Naive thymus-derived CD8-positive, alpha-beta T cell (primary cell): ENCODE measurements at regions of chr4 and their contacts with region 1.

Region 1: GRCh38 chr4:83034630-83035494 is at the start of gene COPS4:
- DNase-seq: peak; percentile 83 to 98 (median 95)
- ATAC-seq: peak; percentile 94 to 96
- H3K4me3 Mint-ChIP-seq: peak within 1 kb of the TSS; percentile 91 to 100 (median 100)
- H3K27ac Mint-ChIP-seq: peak within 1 kb of the TSS; percentile 97 to 100 (median 99)
- H3K4me1 Mint-ChIP-seq: peaks cover 9 to 47% (median 36%) of the 10 kb centered on the region in 4 donors
- H3K27me3 Mint-ChIP-seq: peaks cover 0 to 1% (median 0%) of the 10 kb centered on the region in 5 donors
- polyA plus RNA-seq, gene COPS4: 58.4 to 62.5 (median 61.2) TPM

Region 2: DNA sequence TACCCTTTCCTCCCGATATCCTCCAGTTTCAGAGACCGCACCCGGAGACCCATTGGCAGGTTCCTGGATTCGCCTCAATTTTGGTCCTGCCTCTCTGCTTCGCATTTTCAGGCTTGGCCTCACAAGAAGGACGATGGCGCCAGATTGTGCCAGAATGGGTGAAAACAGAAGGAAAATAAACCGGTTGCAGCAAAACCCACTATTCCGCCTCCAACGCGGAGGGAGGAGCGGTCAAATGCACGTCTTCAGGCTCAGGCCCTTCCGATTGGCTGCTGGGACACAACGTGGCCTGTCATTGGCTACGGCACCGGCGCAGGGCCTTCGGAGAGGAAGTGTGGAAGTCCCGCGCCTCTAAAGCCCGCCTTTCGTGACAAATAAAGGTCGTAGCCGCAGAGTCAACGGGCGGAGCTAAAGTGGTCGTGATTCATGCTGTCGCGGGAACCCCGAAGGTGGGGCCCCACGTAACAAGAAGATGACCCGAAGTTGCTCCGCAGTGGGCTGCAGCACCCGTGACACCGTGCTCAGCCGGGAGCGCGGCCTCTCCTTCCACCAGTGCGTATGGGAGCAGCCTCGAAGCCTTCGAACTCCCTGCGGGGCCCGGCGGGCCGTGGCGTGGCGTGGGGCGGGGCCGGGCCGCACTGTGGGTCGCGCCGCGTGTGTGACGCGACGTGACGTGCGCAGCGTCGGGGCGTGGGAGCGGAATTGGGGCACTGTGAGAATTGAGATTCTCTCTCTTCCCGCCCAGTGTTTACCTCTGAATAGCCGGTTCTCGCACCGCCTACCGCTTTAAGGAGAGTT is 134.3 kb before region 1 on chr4 and contains the start of gene THAP9:
- POLR2A ChIA-PET with region 1: interaction called, 13 read pairs
- DNase-seq: peak; percentile 90 to 100 (median 98)
- ATAC-seq: peak; percentile 88 to 90
- H3K4me3 Mint-ChIP-seq: no peak within 1 kb of the TSS
- H3K27ac Mint-ChIP-seq: no peak within 1 kb of the TSS
- H3K4me1 Mint-ChIP-seq: peaks cover 12 to 30% (median 18%) of the 10 kb centered on the region in 4 donors
- H3K27me3 Mint-ChIP-seq: no peaks in the 10 kb centered on the region
- polyA plus RNA-seq, gene THAP9: 1.6 to 2.9 (median 1.7) TPM

Region 3: GRCh38 chr4:82989575-82990429 is 45.1 kb before region 1 on chr4:
- POLR2A ChIA-PET with region 1: no interaction called
- DNase-seq: peak in 2 of 10 donors; percentile 0 to 38
- ATAC-seq: peak; percentile 79 to 86
- H3K4me3 Mint-ChIP-seq: peak overlapping the region; percentile 29 to 74 (median 56)
- H3K27ac Mint-ChIP-seq: peak overlapping the region; percentile 63 to 91 (median 82)
- H3K4me1 Mint-ChIP-seq: peaks cover 12 to 27% (median 20%) of the 10 kb centered on the region in 4 donors
- H3K27me3 Mint-ChIP-seq: no peaks in the 10 kb centered on the region

Region 4: GRCh38 chr4:83067058-83067639 is 32.3 kb after region 1 on chr4:
- POLR2A ChIA-PET with region 1: no interaction called
- DNase-seq: no peak
- ATAC-seq: no peak
- H3K4me3 Mint-ChIP-seq: no peak overlapping the region
- H3K27ac Mint-ChIP-seq: no peak overlapping the region
- H3K4me1 Mint-ChIP-seq: peaks cover 0 to 2% (median 0%) of the 10 kb centered on the region in 4 donors
- H3K27me3 Mint-ChIP-seq: no peaks in the 10 kb centered on the region

Region 5: DNA sequence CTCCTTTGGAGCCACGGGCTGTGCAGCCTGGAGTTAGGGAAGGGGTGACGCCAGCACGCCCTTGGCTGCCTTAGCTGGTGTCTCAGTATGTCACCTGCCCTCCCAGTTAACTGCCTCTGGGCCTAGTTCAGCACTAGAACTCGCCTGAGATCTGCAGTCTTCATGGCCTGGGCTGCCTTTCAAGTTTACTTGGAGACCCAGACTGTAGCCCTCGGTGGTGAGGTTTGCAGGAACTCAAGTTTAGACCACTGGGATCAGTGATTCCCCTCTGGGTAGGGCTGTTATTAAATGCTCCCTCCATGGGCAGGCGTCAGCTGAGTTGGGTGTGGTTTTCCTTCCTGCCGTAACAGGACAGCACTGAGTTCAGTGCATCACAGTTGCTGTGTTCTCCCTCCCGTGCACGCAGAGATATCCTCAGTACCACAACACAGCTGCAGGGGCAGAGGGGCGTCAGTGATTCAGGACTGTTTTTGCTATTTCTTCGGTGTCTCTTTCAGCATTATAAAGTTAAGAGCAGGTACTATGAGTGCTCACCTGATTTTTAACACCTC is 49.1 kb after region 1 on chr4:
- POLR2A ChIA-PET with region 1: no interaction called
- DNase-seq: peak; percentile 35 to 90 (median 75)
- ATAC-seq: peak; percentile 97 to 99
- H3K4me3 Mint-ChIP-seq: peak overlapping the region; percentile 20 to 87 (median 62)
- H3K27ac Mint-ChIP-seq: peak overlapping the region; percentile 94 to 99 (median 98)
- H3K4me1 Mint-ChIP-seq: peaks cover 26 to 60% (median 44%) of the 10 kb centered on the region in 4 donors
- H3K27me3 Mint-ChIP-seq: no peaks in the 10 kb centered on the region

Region 6: GRCh38 chr4:83097018-83097417 is 62.2 kb after region 1 on chr4:
- POLR2A ChIA-PET with region 1: no interaction called
- DNase-seq: no peak
- ATAC-seq: no peak
- H3K4me3 Mint-ChIP-seq: peak overlapping the region in 1 of 10 donors; percentile 16
- H3K27ac Mint-ChIP-seq: peak overlapping the region; percentile 24 to 87 (median 71)
- H3K4me1 Mint-ChIP-seq: peaks cover 25 to 75% (median 62%) of the 10 kb centered on the region in 4 donors
- H3K27me3 Mint-ChIP-seq: no peaks in the 10 kb centered on the region